Right lobe of liver (tissue), 6 donors: ENCODE measurements at regions of chr16 and their contacts with region 1.

Region 1: DNA sequence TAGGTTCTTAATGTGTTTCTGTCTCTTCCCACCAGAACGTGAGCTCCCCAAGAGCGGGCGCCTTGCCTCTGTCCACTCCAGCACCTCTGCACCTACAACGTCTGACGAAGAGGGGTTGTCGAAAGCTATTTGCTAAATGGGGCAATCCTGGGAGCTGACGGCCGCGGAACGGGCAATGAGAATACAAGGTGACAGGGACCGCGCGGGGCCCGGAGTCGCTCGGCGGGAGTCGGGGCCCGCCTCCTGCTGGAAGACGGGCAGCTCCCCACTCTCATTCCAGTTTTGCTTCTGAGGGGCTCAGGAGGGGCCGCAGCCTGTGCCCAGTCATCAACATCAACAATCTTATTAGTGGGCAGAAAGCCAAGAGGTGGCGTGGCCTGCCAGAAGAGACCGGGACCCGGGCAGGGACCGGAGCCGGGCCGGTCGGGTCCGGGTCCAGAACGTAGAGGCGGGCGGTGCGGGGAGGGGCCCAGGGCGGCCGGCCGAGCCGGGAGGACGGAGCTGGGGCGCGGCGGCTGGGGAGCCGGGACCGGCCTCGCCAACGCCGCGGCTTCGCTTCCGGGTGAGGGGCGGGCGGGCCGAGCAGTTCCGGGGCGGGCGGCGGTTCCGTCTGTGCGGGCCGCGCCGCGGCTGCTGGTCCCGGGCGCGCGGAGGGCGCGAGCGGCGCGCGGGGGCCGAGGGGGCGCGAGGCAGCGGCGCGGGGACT is at the start of gene MOSMO:
- DNase-seq: peak; percentile 80 to 83 (median 80)
- ATAC-seq: peak; percentile 85 to 94 (median 92)
- H3K4me3 ChIP-seq: peak within 1 kb of the TSS; percentile 80 to 98 (median 90)
- H3K27ac ChIP-seq: peak within 1 kb of the TSS; percentile 48 to 84 (median 63)
- H3K4me1 ChIP-seq: peaks cover 0 to 31% (median 5%) of the 10 kb centered on the region in 4 donors
- H3K27me3 ChIP-seq: no peaks in the 10 kb centered on the region
- CTCF ChIP-seq: no peak
- POLR2A ChIP-seq: peak; percentile 57
- total RNA-seq, gene MOSMO: 6.7 to 13.4 (median 7.5) TPM

Region 2: DNA sequence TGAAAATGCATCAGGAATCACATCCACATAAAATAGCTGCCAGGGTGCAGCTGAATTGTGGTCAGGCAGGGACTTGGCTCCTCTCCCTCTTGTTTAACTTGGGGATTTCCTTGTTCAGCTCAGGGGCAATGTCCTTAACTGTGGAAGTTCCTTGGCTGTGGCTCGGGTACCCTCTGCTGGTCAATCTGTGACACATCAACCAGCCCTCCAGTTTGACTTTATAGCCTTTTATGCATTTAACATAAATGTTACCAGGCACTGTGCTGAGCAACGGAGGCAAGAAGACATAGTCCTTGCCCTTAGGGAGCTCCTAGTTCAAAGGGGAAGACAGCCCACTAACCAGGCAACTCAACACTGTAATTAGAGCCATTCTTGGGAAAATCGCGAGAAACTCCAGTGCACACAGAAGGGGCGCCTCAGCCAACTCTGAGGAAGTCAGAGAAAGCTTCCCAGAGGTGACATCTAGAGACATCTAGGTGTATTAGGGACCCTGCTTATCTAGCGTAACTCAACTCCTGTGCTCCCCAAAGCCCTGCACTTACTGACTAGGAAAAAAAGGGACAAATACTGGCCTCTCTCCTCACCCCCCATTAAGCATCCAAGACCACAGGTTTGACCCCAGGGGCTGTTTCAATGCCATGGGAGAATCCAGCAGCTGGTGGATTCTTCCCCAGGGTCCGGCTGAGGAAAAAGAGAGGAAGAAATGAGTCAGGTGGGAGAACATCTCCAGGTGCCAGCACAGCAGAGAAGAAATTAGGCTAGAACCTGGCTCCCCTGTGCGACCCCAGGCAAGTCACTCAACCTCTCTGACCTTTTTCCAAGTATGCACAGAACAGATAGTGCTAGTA is 181.2 kb after region 1 on chr16:
- intact Hi-C with region 1: loop called (anchors 5 to 10 kb)
- DNase-seq: peak; percentile 64 to 72 (median 72)
- ATAC-seq: peak in 1 of 4 donors; percentile 12
- H3K4me3 ChIP-seq: no peak overlapping the region
- H3K27ac ChIP-seq: peak overlapping the region; percentile 78 to 85 (median 85)
- H3K4me1 ChIP-seq: peaks cover 0 to 26% (median 7%) of the 10 kb centered on the region in 4 donors
- H3K27me3 ChIP-seq: no peaks in the 10 kb centered on the region
- CTCF ChIP-seq: peak; percentile 76 to 87 (median 82)
- POLR2A ChIP-seq: no peak

Region 3: GRCh38 chr16:22297114-22297878 is 289.6 kb after region 1 on chr16 and contains the start of gene POLR3E:
- intact Hi-C with region 1: no loop called
- DNase-seq: peak; percentile 99
- ATAC-seq: peak; percentile 93 to 97 (median 94)
- H3K4me3 ChIP-seq: peak within 1 kb of the TSS; percentile 76 to 94 (median 91)
- H3K27ac ChIP-seq: peak within 1 kb of the TSS; percentile 84 to 99 (median 93)
- H3K4me1 ChIP-seq: peaks cover 0 to 7% (median 0%) of the 10 kb centered on the region in 4 donors
- H3K27me3 ChIP-seq: no peaks in the 10 kb centered on the region
- CTCF ChIP-seq: peak; percentile 95 to 99 (median 96)
- POLR2A ChIP-seq: peak; percentile 85
- total RNA-seq, gene POLR3E: 15.8 to 35.7 (median 26.9) TPM